ENCODE measurements at regions of chr16 and their contacts with region 1.

Region 1: DNA sequence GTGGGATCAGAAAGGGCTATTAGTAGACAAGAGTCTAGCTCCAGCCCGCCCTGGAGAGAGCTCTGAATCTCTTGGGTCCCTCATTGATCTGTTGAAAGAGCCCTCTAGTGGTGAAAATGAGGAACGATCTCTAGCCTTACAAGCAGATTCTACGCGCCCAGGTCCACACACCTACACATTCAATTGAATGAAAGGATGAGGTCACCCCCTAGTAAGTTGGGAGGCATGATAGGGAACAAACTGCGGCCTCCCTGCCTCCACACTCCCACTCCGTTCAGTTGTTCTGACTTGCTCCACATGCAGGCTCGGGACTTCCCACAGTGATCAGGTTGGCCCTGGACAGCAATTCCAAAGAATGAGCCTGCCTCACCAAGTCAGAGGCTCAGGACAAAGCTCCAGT is 2.9 kb upstream of the CACNG3 start:
- DNase-seq: peak; percentile 68
- H3K4me3 ChIP-seq: no peak overlapping the region; a peak in 1 of 4 replicates
- H3K27ac ChIP-seq: no peak overlapping the region
- H3K4me1 ChIP-seq: no peaks in the 10 kb centered on the region
- H3K27me3 ChIP-seq: no peaks in the 10 kb centered on the region
- CTCF ChIP-seq: peak; percentile 66
- EP300 ChIP-seq: no peak
- RAD21 ChIP-seq: peak; percentile 67

Region 2: GRCh38 chr16:24036614-24037013 is 216.6 kb before region 1 on chr16:
- CTCF ChIA-PET with region 1: interaction called, 223 read pairs
- POLR2A ChIA-PET with region 1: no interaction called
- DNase-seq: peak; percentile 79
- H3K4me3 ChIP-seq: no peak overlapping the region; a peak in 1 of 4 replicates
- H3K27ac ChIP-seq: no peak overlapping the region
- H3K4me1 ChIP-seq: no peaks in the 10 kb centered on the region
- H3K27me3 ChIP-seq: no peaks in the 10 kb centered on the region
- CTCF ChIP-seq: peak; percentile 66
- EP300 ChIP-seq: no peak
- RAD21 ChIP-seq: peak; percentile 94

Region 3: GRCh38 chr16:24054741-24055491 is 198.3 kb before region 1 on chr16:
- CTCF ChIA-PET with region 1: interaction called, 11 read pairs
- POLR2A ChIA-PET with region 1: no interaction called
- DNase-seq: no peak
- H3K4me3 ChIP-seq: no peak overlapping the region
- H3K27ac ChIP-seq: no peak overlapping the region
- H3K4me1 ChIP-seq: no peaks in the 10 kb centered on the region
- H3K27me3 ChIP-seq: no peaks in the 10 kb centered on the region
- CTCF ChIP-seq: no peak
- EP300 ChIP-seq: no peak
- RAD21 ChIP-seq: no peak

Region 4: DNA sequence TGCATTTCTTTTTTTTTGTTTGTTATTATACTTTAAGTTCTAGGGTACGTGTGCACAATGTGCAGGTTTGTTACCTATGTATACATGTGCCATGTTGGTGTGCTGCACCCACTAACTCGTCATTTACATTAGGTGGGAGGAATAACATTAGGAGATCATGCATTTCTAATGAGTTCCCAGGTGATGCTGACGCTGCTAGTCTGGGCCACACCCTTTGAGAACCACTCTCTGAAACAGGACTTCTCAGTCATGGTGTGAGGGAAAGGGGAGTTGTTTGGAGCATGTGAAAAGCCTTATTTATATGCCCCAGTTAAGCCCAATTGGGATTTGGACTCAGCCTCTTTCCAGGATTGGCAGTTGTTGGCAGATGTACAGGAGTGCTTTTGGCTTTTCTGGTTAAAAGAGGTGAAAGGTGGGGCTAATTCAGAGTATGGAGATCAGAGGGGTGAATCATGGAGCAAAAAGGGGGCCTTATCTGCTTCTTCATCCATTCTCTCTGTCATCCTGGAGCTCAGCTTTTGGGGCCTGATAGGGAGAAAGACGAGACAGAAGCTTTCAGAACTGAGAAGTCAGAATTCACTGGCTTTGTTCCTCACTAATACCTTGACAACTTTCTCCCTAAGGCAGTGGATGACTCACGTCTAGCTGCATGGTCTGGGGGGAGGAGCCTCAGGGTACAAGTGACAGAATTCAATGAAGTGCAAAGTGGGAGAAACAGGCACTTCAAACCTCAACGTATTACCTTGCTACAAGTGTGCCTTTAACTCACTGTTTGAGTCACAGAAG is 177.1 kb before region 1 on chr16:
- CTCF ChIA-PET with region 1: interaction called, 70 read pairs
- POLR2A ChIA-PET with region 1: no interaction called
- DNase-seq: no peak
- H3K4me3 ChIP-seq: no peak overlapping the region
- H3K27ac ChIP-seq: no peak overlapping the region
- H3K4me1 ChIP-seq: peaks cover 0 to 6% of the 10 kb centered on the region in 2 experiments; a peak in 2 of 4 replicates
- H3K27me3 ChIP-seq: no peaks in the 10 kb centered on the region
- CTCF ChIP-seq: no peak
- EP300 ChIP-seq: no peak
- RAD21 ChIP-seq: no peak

Region 5: GRCh38 chr16:24235806-24236205 is 17.4 kb before region 1 on chr16:
- CTCF ChIA-PET with region 1: interaction called, 15 read pairs
- POLR2A ChIA-PET with region 1: no interaction called
- DNase-seq: no peak
- H3K4me3 ChIP-seq: no peak overlapping the region
- H3K27ac ChIP-seq: no peak overlapping the region
- H3K4me1 ChIP-seq: no peaks in the 10 kb centered on the region
- H3K27me3 ChIP-seq: no peaks in the 10 kb centered on the region
- CTCF ChIP-seq: no peak
- EP300 ChIP-seq: no peak
- RAD21 ChIP-seq: no peak

Region 6: GRCh38 chr16:24504472-24505345 is 251.5 kb after region 1 on chr16:
- CTCF ChIA-PET with region 1: interaction called, 37 read pairs
- POLR2A ChIA-PET with region 1: no interaction called
- DNase-seq: peak; percentile 64
- H3K4me3 ChIP-seq: peak overlapping the region in 1 of 2 experiments; percentile 49; a peak in 1 of 4 replicates
- H3K27ac ChIP-seq: no peak overlapping the region
- H3K4me1 ChIP-seq: peaks cover 0 to 4% of the 10 kb centered on the region in 2 experiments; a peak in 1 of 4 replicates
- H3K27me3 ChIP-seq: no peaks in the 10 kb centered on the region
- CTCF ChIP-seq: peak; percentile 80
- EP300 ChIP-seq: no peak
- RAD21 ChIP-seq: peak; percentile 91

Region 7: GRCh38 chr16:24626256-24626655 is 373.1 kb after region 1 on chr16:
- CTCF ChIA-PET with region 1: no interaction called
- POLR2A ChIA-PET with region 1: no interaction called
- DNase-seq: no peak
- H3K4me3 ChIP-seq: no peak overlapping the region
- H3K27ac ChIP-seq: peak overlapping the region in 1 of 2 experiments; percentile 13; a peak in 1 of 4 replicates
- H3K4me1 ChIP-seq: no peaks in the 10 kb centered on the region
- H3K27me3 ChIP-seq: no peaks in the 10 kb centered on the region
- CTCF ChIP-seq: no peak
- EP300 ChIP-seq: no peak
- RAD21 ChIP-seq: no peak

Measured in SK-N-SH (cell line).